Testis (tissue), 5 donors: ENCODE measurements at regions of chr11 and their contacts with region 1.

Region 1: DNA sequence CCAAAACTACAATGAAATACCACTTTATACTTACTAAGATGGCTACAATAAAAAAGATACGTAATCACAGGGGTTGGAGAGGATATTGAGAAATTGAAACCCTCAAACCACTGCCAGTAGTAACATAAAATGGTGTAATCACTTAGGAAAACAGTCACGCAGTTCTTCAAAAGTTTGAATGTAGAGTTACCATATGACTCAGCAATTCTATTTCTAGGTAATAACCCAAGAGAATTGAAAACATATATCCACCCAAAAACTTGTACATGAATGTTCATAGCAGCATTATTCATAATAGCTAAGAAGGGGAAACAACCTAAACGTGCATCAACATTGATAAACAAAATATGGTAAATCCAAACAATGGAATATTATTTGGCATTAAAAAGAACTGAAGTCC is 24.4 kb upstream of the PSMA1 start:
- DNase-seq: no peak
- H3K4me3 ChIP-seq: no peak overlapping the region
- H3K27ac ChIP-seq: no peak overlapping the region
- H3K4me1 ChIP-seq: peaks cover 26% of the 10 kb centered on the region
- H3K27me3 ChIP-seq: no peaks in the 10 kb centered on the region
- CTCF ChIP-seq: no peak
- POLR2A ChIP-seq: no peak

Region 2: DNA sequence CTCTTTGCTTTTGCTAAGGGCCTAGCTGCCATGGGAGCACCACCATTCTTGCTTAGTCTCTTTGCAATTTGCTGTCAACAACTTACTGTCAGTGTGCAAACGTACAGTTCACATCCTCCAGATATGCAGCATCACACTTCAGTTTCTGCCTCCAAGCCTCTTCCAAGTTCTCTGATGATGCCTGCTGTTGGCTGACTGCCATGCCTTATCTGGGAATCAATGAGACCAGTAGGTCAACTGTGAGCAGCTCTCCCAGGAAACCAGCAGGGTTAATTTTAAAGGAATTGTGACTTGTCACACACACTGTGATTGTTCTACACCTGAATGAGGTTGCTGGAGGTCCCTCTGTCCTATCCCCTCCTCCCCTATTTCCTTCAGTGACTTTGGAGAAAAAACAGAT is 101.0 kb before region 1 on chr11:
- intact Hi-C with region 1: no loop called
- DNase-seq: peak; percentile 17
- H3K4me3 ChIP-seq: no peak overlapping the region
- H3K27ac ChIP-seq: no peak overlapping the region
- H3K4me1 ChIP-seq: no peaks in the 10 kb centered on the region
- H3K27me3 ChIP-seq: no peaks in the 10 kb centered on the region
- CTCF ChIP-seq: no peak
- POLR2A ChIP-seq: no peak

Region 3: DNA sequence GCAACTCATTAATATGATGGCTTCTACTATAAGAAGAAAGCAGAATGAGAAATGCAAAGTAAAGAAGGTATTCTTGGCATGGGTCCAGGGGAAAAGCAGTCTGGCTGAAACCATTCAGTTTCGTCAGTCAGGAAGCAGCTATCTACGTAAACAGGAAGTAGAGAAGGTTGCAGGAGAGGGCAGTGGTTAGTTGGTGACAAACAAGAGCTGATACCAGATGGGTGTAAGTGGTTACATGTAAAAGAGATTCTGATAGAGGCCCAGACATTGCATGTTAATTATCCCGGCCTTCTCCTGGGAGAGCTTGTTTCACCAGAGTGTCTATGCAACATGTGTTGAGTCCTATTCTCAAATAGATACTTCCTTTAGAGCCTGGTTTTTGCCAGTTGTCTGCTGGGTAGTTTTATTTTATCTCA is 33.9 kb after region 1 on chr11:
- intact Hi-C with region 1: no loop called
- DNase-seq: no peak
- H3K4me3 ChIP-seq: no peak overlapping the region
- H3K27ac ChIP-seq: no peak overlapping the region
- H3K4me1 ChIP-seq: no peaks in the 10 kb centered on the region
- H3K27me3 ChIP-seq: no peaks in the 10 kb centered on the region
- CTCF ChIP-seq: no peak
- POLR2A ChIP-seq: no peak

Region 4: DNA sequence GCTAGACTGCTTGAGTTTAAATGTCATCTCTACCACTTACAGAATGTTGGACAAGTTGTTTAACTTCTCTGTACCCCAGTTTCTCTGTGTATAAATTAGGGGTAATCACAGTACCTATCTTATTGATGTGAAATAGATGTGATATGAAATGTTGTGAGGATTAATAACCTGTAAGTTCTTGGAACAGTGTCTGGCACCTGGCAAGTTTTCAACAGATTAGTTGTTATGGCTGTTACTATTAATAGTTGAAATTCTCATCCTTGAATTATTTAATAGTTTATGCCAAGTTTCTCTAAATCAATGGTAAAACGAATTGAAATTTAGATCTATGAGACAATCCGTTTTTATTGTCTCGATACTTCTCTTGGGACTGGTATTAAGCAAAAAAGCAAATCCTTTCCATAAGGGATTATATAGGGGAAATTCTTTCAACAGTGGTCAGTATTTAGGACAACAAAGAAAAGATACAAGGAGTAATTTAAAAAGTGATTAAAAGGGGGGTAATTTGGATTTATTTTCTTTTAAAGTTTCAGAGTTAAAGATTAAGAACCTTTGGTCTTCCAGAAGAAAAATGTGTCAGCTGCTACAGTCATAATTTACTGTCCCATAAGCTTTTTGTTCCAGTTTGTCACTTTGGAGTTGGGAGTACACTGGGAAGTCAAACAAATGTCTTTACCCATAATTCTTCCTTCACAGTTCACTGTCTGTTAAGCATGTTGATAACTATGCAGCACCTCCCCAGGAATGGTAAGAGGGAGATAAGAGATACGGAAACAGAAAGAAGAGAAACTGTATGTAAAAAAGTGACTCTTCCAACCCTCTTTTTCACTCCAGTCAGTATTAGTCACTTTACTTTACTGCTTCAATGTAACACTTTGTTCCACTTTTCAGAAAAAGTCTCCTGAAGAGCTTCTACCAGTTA is 112.2 kb after region 1 on chr11:
- intact Hi-C with region 1: no loop called
- DNase-seq: no peak
- H3K4me3 ChIP-seq: no peak overlapping the region
- H3K27ac ChIP-seq: no peak overlapping the region
- H3K4me1 ChIP-seq: peaks cover 5% of the 10 kb centered on the region
- H3K27me3 ChIP-seq: no peaks in the 10 kb centered on the region
- CTCF ChIP-seq: no peak
- POLR2A ChIP-seq: no peak

Region 5: GRCh38 chr11:14907411-14908213 is 363.0 kb after region 1 on chr11:
- intact Hi-C with region 1: loop called (anchors 10 kb)
- DNase-seq: peak; percentile 94
- H3K4me3 ChIP-seq: no peak overlapping the region
- H3K27ac ChIP-seq: no peak overlapping the region
- H3K4me1 ChIP-seq: peaks cover 8% of the 10 kb centered on the region
- H3K27me3 ChIP-seq: no peaks in the 10 kb centered on the region
- CTCF ChIP-seq: peak; percentile 64 to 71 (median 67)
- POLR2A ChIP-seq: no peak